ENCODE measurements at regions of chr11 and their contacts with region 1.

Region 1: DNA sequence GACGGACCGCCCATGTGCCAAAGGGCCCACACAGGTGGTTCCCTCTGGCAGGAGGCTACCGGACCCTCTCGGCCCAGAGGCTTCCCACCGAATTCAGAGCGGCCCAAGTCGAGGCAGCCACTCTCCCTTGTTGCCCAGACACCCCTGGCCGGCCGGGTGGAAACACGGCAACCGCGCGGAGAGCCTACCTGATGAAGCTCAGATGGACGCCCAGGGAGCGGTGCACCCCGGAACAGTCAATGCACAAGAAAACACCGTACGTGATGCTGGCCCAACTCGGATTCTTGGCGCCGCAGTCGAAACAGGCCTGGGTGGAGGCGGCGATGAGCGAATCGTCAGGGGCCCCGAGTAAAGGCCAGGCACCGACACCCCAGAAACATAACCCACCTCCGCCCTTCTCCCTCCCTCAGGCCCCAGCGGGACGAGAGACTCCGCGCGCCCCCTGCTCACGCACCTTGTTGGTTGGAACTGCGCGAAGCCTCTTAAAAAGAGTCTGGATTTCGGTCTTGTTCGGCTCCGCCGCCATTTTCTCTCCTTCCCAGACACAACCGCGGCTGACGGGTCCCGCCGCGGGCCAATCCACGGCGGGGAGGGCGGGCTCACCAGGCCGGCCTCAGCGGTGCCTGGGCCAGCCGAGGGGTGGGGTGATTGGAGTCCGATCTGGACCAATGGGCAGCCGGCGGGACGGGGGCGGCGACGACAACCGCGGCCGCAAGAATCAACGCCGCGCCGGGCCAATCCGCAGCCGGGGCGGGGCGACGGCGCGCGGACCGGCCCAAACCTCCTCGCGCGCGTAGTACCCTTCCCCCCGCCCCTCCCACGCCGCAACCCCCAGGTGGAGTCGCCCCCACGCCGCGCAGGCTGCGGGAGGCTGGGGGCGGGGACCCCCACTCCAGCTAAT is at the start of gene ARFGAP2:
- DNase-seq: peak; percentile 94 to 97 (median 96)
- H3K4me3 ChIP-seq: peak within 1 kb of the TSS; percentile 89
- H3K4me3 Mint-ChIP-seq: peak within 1 kb of the TSS; percentile 94 to 100 (median 99)
- H3K27ac ChIP-seq: peak within 1 kb of the TSS; percentile 82
- H3K27ac Mint-ChIP-seq: peak within 1 kb of the TSS; percentile 98 to 100 (median 99)
- H3K4me1 ChIP-seq: peaks cover 22% of the 10 kb centered on the region
- H3K4me1 Mint-ChIP-seq: peaks cover 28 to 59% (median 47%) of the 10 kb centered on the region in 3 donors
- H3K27me3 ChIP-seq: no peaks in the 10 kb centered on the region
- H3K27me3 Mint-ChIP-seq: peaks cover 0 to 7% of the 10 kb centered on the region in 2 donors
- total RNA-seq, gene ARFGAP2: 100 to 104 TPM

Region 2: DNA sequence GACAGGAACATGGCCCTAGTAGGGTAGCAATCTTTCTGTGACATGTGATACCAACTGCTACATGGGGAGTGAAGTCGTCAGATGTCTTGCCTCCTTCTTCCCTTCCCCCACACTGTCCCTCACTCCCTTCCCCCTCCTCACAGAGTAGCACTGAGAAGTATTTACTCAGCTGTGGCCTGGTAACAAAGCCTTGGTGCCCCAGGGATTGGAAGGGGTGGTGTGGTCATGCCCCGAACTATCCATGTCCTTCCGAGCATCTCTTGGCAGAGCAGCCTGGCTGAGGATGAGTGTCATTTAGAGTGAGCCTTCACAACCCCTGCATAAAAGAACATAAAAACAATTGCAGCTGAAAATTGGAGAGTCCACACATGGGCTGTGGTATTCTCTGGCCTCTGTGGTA is 46.0 kb before region 1 on chr11:
- CTCF ChIA-PET with region 1: no interaction called
- POLR2A ChIA-PET with region 1: no interaction called
- DNase-seq: no peak
- H3K4me3 ChIP-seq: no peak overlapping the region
- H3K4me3 Mint-ChIP-seq: no peak overlapping the region
- H3K27ac ChIP-seq: no peak overlapping the region
- H3K27ac Mint-ChIP-seq: no peak overlapping the region
- H3K4me1 ChIP-seq: no peaks in the 10 kb centered on the region
- H3K4me1 Mint-ChIP-seq: no peaks in the 10 kb centered on the region
- H3K27me3 ChIP-seq: no peaks in the 10 kb centered on the region
- H3K27me3 Mint-ChIP-seq: no peaks in the 10 kb centered on the region

Region 3: GRCh38 chr11:47213985-47214564 is 37.5 kb after region 1 on chr11:
- CTCF ChIA-PET with region 1: interaction called, 5 read pairs
- POLR2A ChIA-PET with region 1: interaction called, 15 read pairs
- DNase-seq: peak; percentile 74 to 87 (median 81)
- H3K4me3 ChIP-seq: peak overlapping the region; percentile 100
- H3K4me3 Mint-ChIP-seq: peak overlapping the region; percentile 87 to 100 (median 97)
- H3K27ac ChIP-seq: peak overlapping the region; percentile 90
- H3K27ac Mint-ChIP-seq: peak overlapping the region; percentile 88 to 100 (median 99)
- H3K4me1 ChIP-seq: peaks cover 34% of the 10 kb centered on the region
- H3K4me1 Mint-ChIP-seq: peaks cover 29 to 35% (median 30%) of the 10 kb centered on the region in 3 donors
- H3K27me3 ChIP-seq: no peaks in the 10 kb centered on the region
- H3K27me3 Mint-ChIP-seq: no peaks in the 10 kb centered on the region

Region 4: GRCh38 chr11:47248664-47249377 is 72.2 kb after region 1 on chr11 and contains the start of gene ACP2:
- CTCF ChIA-PET with region 1: interaction called, 20 read pairs
- POLR2A ChIA-PET with region 1: interaction called, 3 read pairs
- DNase-seq: peak; percentile 75 to 90 (median 84)
- H3K4me3 ChIP-seq: peak within 1 kb of the TSS; percentile 86
- H3K4me3 Mint-ChIP-seq: peak within 1 kb of the TSS; percentile 95 to 99 (median 96)
- H3K27ac ChIP-seq: peak within 1 kb of the TSS; percentile 85
- H3K27ac Mint-ChIP-seq: peak within 1 kb of the TSS; percentile 73 to 100 (median 98)
- H3K4me1 ChIP-seq: peaks cover 23% of the 10 kb centered on the region
- H3K4me1 Mint-ChIP-seq: peaks cover 23 to 34% (median 28%) of the 10 kb centered on the region in 3 donors
- H3K27me3 ChIP-seq: no peaks in the 10 kb centered on the region
- H3K27me3 Mint-ChIP-seq: no peaks in the 10 kb centered on the region
- total RNA-seq, gene ACP2: 24.1 to 24.5 TPM

Region 5: GRCh38 chr11:47259178-47259977 is 82.8 kb after region 1 on chr11:
- CTCF ChIA-PET with region 1: interaction called, 18 read pairs
- POLR2A ChIA-PET with region 1: interaction called, 6 read pairs
- DNase-seq: peak in 3 of 5 donors; percentile 16 to 57 (median 29)
- H3K4me3 ChIP-seq: no peak overlapping the region
- H3K4me3 Mint-ChIP-seq: peak overlapping the region in 1 of 7 donors; percentile 74
- H3K27ac ChIP-seq: no peak overlapping the region
- H3K27ac Mint-ChIP-seq: peak overlapping the region in 3 of 8 donors; percentile 20 to 68 (median 47)
- H3K4me1 ChIP-seq: peaks cover 8% of the 10 kb centered on the region
- H3K4me1 Mint-ChIP-seq: peaks cover 0 to 9% (median 2%) of the 10 kb centered on the region in 3 donors
- H3K27me3 ChIP-seq: no peaks in the 10 kb centered on the region
- H3K27me3 Mint-ChIP-seq: no peaks in the 10 kb centered on the region

Region 6: GRCh38 chr11:47264521-47264920 is 87.9 kb after region 1 on chr11:
- CTCF ChIA-PET with region 1: interaction called, 18 read pairs
- POLR2A ChIA-PET with region 1: no interaction called
- DNase-seq: no peak
- H3K4me3 ChIP-seq: no peak overlapping the region
- H3K4me3 Mint-ChIP-seq: peak overlapping the region in 1 of 7 donors; percentile 29
- H3K27ac ChIP-seq: no peak overlapping the region
- H3K27ac Mint-ChIP-seq: peak overlapping the region in 2 of 8 donors; percentile 12 to 44
- H3K4me1 ChIP-seq: peaks cover 18% of the 10 kb centered on the region
- H3K4me1 Mint-ChIP-seq: peaks cover 17 to 30% (median 20%) of the 10 kb centered on the region in 3 donors
- H3K27me3 ChIP-seq: no peaks in the 10 kb centered on the region
- H3K27me3 Mint-ChIP-seq: no peaks in the 10 kb centered on the region

Region 7: GRCh38 chr11:47443817-47444216 is 267.2 kb after region 1 on chr11:
- CTCF ChIA-PET with region 1: no interaction called
- POLR2A ChIA-PET with region 1: interaction called, 11 read pairs
- DNase-seq: no peak
- H3K4me3 ChIP-seq: no peak overlapping the region
- H3K4me3 Mint-ChIP-seq: no peak overlapping the region
- H3K27ac ChIP-seq: no peak overlapping the region
- H3K27ac Mint-ChIP-seq: peak overlapping the region in 1 of 8 donors; percentile 43
- H3K4me1 ChIP-seq: no peaks in the 10 kb centered on the region
- H3K4me1 Mint-ChIP-seq: no peaks in the 10 kb centered on the region
- H3K27me3 ChIP-seq: no peaks in the 10 kb centered on the region
- H3K27me3 Mint-ChIP-seq: peaks cover 0 to 1% of the 10 kb centered on the region in 2 donors

Region 8: DNA sequence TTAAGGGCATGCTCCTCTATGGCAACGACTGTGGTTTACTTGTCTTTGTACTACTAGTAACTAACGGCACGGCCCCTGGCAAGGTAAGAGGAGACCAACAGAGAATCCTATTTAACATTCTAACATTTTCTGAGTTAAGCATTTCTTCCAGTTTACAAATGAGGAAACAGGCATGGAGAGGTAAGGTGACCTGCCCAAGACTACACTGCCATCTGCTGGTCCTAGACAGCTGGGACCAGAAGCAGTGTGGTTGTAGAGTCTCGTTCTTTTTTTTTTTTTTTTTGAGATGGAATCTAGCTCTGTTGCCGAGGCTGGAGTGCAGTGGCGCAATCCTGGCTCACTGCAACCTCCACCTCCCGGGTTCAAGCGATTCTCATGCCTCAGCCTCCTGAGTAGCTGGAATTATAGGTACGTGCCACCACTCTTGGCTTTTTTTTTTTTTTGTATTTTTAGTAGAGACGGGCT is 277.6 kb after region 1 on chr11:
- CTCF ChIA-PET with region 1: interaction called, 12 read pairs
- POLR2A ChIA-PET with region 1: no interaction called
- DNase-seq: peak; percentile 34 to 79 (median 55)
- H3K4me3 ChIP-seq: no peak overlapping the region
- H3K4me3 Mint-ChIP-seq: no peak overlapping the region
- H3K27ac ChIP-seq: no peak overlapping the region
- H3K27ac Mint-ChIP-seq: no peak overlapping the region
- H3K4me1 ChIP-seq: no peaks in the 10 kb centered on the region
- H3K4me1 Mint-ChIP-seq: peaks cover 0 to 6% (median 5%) of the 10 kb centered on the region in 3 donors
- H3K27me3 ChIP-seq: no peaks in the 10 kb centered on the region
- H3K27me3 Mint-ChIP-seq: no peaks in the 10 kb centered on the region

Measured in CD8-positive, alpha-beta memory T cell (primary cell).